Activated B cell treated with CpG ODN at 0.5 μM for 24 hours (primary cell): ENCODE measurements at regions of chr3 and their contacts with region 1.

Region 1: GRCh38 chr3:129627429-129628168 is 21.1 kb upstream of the PLXND1 start:
- DNase-seq: peak; percentile 48
- ATAC-seq: peak; percentile 65
- H3K4me3 Mint-ChIP-seq: peak overlapping the region; percentile 93
- H3K27ac Mint-ChIP-seq: peak overlapping the region; percentile 76
- H3K4me1 Mint-ChIP-seq: peaks cover 21% of the 10 kb centered on the region
- H3K27me3 Mint-ChIP-seq: no peaks in the 10 kb centered on the region
- CTCF ChIP-seq: no peak

Region 2: GRCh38 chr3:128863560-128863959 is 764.0 kb before region 1 on chr3:
- CTCF ChIA-PET with region 1: no interaction called
- POLR2A ChIA-PET with region 1: no interaction called
- intact Hi-C with region 1: no loop called
- DNase-seq: no peak
- ATAC-seq: no peak
- H3K4me3 Mint-ChIP-seq: no peak overlapping the region
- H3K27ac Mint-ChIP-seq: no peak overlapping the region
- H3K4me1 Mint-ChIP-seq: no peaks in the 10 kb centered on the region
- H3K27me3 Mint-ChIP-seq: no peaks in the 10 kb centered on the region
- CTCF ChIP-seq: no peak

Region 3: DNA sequence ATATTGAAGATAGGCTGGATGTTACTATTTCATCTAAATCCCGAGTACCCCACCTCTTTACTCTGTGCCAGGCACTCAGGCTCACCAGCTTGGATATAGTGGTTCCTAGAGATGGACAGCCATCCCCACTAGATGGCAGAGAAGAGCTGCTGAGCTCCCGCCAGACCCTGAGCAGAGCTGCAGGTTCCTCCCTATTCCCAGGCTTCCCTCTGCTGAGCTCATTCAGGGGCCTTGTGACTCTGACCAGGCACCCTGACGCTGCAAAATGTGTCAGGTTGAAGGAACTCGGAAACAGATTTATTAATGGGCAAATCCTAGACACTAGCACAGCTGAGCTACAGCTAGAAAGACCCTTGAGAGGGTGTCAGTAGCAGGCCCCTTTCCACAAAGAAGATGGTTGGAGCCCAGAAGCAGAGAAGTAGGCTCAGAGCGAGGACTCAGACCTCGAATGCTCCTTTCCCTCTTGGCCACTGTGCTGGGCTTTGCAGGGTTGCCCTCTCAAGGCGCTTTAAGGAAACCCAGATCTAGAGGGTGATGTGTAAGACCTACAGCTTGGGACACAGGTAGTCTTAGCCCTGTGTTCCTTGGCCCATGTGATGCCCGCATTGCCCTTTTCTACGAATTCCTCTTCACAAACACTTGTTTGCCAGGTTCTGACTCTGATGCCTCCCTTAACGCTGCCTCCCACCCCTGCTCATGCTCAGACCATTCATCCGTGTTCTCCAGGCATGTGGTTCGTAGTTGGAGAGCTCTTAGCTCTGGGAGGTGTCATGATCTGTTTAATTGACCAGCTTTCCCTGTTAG is 137.2 kb before region 1 on chr3:
- CTCF ChIA-PET with region 1: interaction called, 13 read pairs
- POLR2A ChIA-PET with region 1: no interaction called
- intact Hi-C with region 1: loop called (anchors 1 kb)
- DNase-seq: peak; percentile 30
- ATAC-seq: peak; percentile 95
- H3K4me3 Mint-ChIP-seq: no peak overlapping the region
- H3K27ac Mint-ChIP-seq: no peak overlapping the region
- H3K4me1 Mint-ChIP-seq: no peaks in the 10 kb centered on the region
- H3K27me3 Mint-ChIP-seq: no peaks in the 10 kb centered on the region
- CTCF ChIP-seq: peak; percentile 27

Region 4: DNA sequence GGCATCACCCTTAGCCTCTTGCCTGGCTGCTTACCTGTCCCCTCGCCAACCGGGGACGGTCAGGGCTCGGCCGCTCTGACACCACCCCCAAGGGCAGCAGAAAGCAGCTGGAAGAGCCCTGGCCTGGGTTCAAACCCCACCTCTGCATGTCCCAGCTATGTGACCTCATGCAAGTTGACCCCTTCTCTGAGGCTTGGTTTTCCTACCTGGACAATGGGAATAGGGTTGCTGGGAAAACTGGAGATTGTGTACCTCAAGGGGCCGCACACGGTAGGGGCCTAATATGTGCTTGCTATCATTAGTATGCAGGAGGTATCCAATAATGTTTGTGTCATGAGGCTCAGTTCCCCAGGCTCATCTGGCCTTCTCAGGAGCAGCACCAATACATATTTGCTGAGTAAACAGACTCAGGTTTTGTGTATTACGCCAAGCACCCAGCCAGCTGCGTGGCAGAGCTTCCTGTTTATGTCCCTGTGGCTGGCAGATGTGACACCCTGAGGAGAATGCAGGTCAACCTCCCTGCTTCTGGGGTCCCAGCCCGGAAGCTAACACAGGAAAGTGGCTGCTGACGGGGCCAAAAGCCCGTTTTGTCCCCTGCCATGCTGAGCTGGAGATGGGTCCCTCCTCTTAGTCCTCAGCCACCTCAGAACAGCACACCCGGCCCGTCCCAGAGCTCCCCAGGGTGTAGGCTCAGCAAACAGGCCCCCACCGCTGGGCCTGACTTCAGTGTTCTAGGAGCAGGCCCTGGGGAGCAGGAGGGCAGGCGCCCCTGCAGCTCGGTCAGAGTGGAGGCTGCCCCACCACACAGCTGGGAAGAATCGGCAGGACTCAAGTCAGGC is 50.9 kb before region 1 on chr3:
- CTCF ChIA-PET with region 1: no interaction called
- POLR2A ChIA-PET with region 1: interaction called, 5 read pairs
- intact Hi-C with region 1: loop called (anchors 2 kb)
- DNase-seq: peak; percentile 53
- ATAC-seq: peak; percentile 63
- H3K4me3 Mint-ChIP-seq: peak overlapping the region; percentile 48
- H3K27ac Mint-ChIP-seq: peak overlapping the region; percentile 86
- H3K4me1 Mint-ChIP-seq: peaks cover 61% of the 10 kb centered on the region
- H3K27me3 Mint-ChIP-seq: no peaks in the 10 kb centered on the region
- CTCF ChIP-seq: no peak

Region 5: GRCh38 chr3:129611812-129612533 is 15.6 kb before region 1 on chr3:
- CTCF ChIA-PET with region 1: no interaction called
- POLR2A ChIA-PET with region 1: no interaction called
- intact Hi-C with region 1: no loop called
- DNase-seq: no peak
- ATAC-seq: no peak
- H3K4me3 Mint-ChIP-seq: no peak overlapping the region
- H3K27ac Mint-ChIP-seq: no peak overlapping the region
- H3K4me1 Mint-ChIP-seq: peaks cover 4% of the 10 kb centered on the region
- H3K27me3 Mint-ChIP-seq: peaks cover 16% of the 10 kb centered on the region
- CTCF ChIP-seq: no peak

Region 6: GRCh38 chr3:129824926-129825541 is 197.4 kb after region 1 on chr3:
- CTCF ChIA-PET with region 1: interaction called, 6 read pairs
- POLR2A ChIA-PET with region 1: interaction called, 3 read pairs
- intact Hi-C with region 1: loop called (anchors 1 kb)
- DNase-seq: no peak
- ATAC-seq: peak; percentile 23
- H3K4me3 Mint-ChIP-seq: no peak overlapping the region
- H3K27ac Mint-ChIP-seq: peak overlapping the region; percentile 2
- H3K4me1 Mint-ChIP-seq: peaks cover 50% of the 10 kb centered on the region
- H3K27me3 Mint-ChIP-seq: no peaks in the 10 kb centered on the region
- CTCF ChIP-seq: peak; percentile 78

Region 7: DNA sequence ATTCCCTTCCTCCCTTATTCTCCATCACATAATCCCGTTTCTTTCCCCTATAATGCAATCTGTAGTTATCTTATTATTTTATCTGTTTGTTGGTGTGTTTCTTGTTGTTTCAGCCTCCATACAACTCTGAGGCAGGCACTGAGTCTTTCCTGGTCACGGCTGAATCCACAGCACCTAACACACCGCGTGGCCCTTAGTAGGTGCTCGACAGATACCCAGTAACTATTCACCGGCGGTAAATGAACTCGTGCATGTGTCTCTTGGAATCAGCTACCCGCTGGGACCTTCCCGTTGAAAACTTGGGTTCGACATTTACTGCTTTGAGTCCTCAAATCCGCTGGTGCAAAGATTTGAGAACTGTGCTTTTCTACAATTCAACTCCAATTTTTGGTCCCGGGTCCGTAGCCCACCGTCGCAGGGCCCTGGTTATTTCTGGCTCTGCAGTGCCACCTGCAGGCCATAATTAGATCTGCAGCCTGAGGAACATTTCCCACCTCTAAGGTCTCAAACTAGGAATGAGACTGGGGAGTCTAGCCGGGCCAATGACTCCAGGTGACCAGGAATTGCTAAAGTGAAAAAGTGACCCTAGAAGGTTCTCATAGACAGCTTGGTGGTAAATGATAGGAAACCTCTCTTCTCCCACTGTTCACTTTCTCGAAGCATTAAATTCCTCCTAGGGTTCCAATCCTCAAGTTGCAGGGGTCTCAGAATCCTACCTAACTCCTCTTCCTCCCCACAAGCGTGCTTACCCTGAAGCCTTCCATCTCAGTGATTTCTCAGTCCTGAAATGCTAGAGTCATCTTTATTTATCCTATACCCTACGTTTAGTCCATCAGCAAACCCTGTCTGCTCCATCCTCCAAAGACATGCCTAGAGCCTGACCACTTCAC is 306.9 kb after region 1 on chr3:
- CTCF ChIA-PET with region 1: no interaction called
- POLR2A ChIA-PET with region 1: no interaction called
- intact Hi-C with region 1: loop called (anchors 1 kb)
- DNase-seq: peak; percentile 20
- ATAC-seq: peak; percentile 64
- H3K4me3 Mint-ChIP-seq: no peak overlapping the region
- H3K27ac Mint-ChIP-seq: no peak overlapping the region
- H3K4me1 Mint-ChIP-seq: peaks cover 8% of the 10 kb centered on the region
- H3K27me3 Mint-ChIP-seq: peaks cover 4% of the 10 kb centered on the region
- CTCF ChIP-seq: peak; percentile 81